ENCODE measurements at regions of chr18 and their contacts with region 1.

Region 1: DNA sequence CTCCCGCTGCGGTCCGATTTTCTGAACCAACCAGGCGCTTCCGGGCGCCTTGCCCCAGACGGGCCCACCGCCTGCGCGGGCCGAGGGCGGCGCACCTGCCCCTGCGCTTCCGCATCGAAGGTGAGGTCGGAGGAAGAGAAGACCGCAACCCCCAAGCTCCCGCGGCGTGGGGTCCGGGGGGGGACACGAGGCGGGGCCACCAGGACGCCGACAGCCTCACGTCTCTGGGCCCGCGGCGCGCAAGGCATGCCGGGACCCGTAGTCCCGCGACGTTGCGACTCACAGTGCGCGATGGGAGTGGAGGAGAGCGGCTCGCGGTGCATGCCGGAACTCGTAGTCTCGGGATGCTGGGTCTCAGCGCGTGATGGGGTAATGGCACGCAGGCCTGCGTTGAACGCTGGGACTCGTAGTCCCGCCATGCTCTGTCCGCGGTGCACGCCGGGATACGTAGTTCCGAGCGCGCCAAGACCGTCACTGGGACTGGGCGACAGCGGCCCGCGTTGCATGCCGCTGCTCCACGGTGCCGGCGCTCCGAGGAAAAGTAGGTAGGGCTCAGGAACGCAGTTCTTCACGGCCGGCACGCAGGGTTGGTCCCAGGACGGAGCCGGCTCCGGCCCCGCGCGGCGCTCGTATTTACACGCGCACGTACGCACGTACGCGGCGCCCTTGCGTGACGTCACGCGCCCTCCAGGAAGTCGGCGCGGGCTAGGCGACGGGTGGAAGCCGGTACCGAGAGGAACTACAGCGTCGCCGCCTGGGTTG is at the start of gene CTDP1:
- DNase-seq: peak; percentile 99 to 100
- ATAC-seq: peak; percentile 99
- H3K4me3 ChIP-seq: peak within 1 kb of the TSS; percentile 84 to 95
- H3K27ac ChIP-seq: peak within 1 kb of the TSS; percentile 87 to 98
- H3K4me1 ChIP-seq: no peaks in the 10 kb centered on the region
- H3K27me3 ChIP-seq: no peaks in the 10 kb centered on the region
- total RNA-seq, gene CTDP1: 18.5 to 19.8 TPM

Region 2: DNA sequence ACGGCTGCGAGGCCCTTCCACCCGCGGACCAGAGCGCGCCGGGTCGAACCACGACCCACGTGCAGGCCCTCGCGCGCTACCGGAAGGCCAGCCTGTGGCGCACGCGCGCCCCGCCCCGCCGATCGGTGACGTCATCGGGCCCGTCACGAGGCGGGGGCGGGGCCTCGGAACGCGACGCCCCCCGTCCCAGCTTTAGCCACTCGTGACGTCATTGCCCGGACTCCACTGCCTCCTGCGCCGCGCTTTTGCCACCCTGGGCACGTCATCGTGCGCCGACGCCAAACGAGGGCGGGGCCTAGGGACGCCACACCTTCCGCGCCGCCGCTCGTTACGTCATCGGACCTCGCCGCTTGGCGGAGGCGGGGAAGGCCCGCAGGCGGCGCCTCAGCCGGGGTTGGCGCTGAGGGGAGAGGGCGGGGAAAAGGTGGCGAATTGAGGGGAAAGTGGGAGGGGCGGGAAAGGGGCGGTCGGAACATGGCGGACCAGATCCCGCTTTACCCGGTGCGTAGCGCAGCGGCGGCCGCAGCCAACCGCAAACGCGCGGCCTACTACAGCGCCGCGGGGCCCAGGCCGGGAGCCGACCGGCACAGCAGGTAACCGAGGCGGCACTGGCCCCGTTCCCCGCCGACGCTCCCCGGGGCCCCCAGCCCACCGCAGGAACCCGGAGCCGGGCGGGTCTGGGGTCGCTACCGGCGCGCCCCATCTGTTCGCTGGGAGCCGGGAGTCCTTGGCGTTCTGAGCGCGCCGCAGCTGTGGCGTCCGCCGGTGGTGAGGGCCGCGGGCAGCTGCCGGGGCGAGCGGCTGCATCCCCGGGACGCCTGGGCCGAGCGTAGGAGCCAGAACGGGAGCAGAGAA is 610.1 kb before region 1 on chr18 and contains the start of gene ATP9B:
- intact Hi-C with region 1: loop called in 1 of 2 experiments (anchors 10 kb)
- DNase-seq: peak; percentile 97 to 99
- ATAC-seq: peak; percentile 100
- H3K4me3 ChIP-seq: peak within 1 kb of the TSS; percentile 95 to 98
- H3K27ac ChIP-seq: peak within 1 kb of the TSS; percentile 96 to 98
- H3K4me1 ChIP-seq: no peaks in the 10 kb centered on the region
- H3K27me3 ChIP-seq: no peaks in the 10 kb centered on the region
- total RNA-seq, gene ATP9B: 41.0 to 55.3 TPM

Region 3: GRCh38 chr18:79765491-79766245 is 86.4 kb after region 1 on chr18:
- intact Hi-C with region 1: no loop called
- DNase-seq: peak; percentile 19 to 44
- ATAC-seq: no peak
- H3K4me3 ChIP-seq: no peak overlapping the region
- H3K27ac ChIP-seq: no peak overlapping the region
- H3K4me1 ChIP-seq: no peaks in the 10 kb centered on the region
- H3K27me3 ChIP-seq: no peaks in the 10 kb centered on the region

Region 4: DNA sequence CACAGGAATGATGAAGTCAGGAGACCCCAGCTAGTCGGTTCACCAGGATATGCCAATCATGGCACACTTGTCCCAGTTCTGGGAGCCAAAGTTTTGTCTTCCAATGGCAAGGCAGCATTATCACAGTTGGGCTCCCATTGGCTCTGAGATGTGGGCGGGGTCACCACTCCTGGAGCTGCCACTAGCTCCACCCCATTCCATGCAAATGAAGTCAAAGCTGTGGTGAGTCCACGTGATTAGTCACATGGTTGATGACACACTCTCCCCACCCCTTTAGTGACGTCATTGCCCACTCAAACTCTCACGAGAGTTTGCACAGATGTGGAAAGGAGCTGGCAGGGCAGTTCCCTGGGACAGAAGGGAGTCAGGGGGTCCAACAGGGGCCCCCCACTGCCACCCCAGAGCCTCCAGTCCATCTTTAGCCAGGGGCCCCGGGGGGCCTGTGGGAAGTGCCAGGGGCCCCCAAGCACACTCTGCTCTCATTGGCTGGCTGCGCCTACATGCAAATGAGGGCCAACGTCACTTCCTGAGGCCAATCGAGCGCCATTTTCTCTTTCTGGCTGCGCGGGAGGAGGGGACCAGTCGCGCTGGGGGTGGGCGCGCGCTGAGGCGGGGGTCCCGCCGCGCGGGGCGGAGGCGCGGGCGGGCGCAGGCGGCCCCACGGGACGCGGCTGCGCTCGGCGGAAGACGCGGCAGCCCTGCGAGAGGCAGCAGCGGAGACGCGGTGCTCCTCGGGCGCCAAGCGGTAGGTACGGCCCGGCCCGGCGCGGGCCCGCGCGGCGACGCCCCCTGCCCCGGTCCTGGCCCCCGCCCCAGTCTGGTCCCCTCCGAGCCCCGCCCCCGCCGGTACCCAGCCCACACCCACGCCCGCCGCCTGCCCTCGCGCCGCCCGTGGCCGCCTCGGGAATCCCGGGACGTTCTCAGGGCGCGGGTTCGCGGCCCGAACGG is 429.7 kb after region 1 on chr18 and contains the start of gene ADNP2:
- intact Hi-C with region 1: loop called in 1 of 2 experiments (anchors 10 kb)
- DNase-seq: peak; percentile 88 to 90
- ATAC-seq: peak; percentile 87
- H3K4me3 ChIP-seq: peak within 1 kb of the TSS; percentile 97 to 99
- H3K27ac ChIP-seq: peak within 1 kb of the TSS; percentile 96 to 98
- H3K4me1 ChIP-seq: no peaks in the 10 kb centered on the region
- H3K27me3 ChIP-seq: no peaks in the 10 kb centered on the region
- total RNA-seq, gene ADNP2: 17.5 to 20.1 TPM

Measured in aorta (tissue), 5 donors.